Prostate gland (tissue), 2 donors: ENCODE measurements at regions of chr1 and their contacts with region 1.

Region 1: DNA sequence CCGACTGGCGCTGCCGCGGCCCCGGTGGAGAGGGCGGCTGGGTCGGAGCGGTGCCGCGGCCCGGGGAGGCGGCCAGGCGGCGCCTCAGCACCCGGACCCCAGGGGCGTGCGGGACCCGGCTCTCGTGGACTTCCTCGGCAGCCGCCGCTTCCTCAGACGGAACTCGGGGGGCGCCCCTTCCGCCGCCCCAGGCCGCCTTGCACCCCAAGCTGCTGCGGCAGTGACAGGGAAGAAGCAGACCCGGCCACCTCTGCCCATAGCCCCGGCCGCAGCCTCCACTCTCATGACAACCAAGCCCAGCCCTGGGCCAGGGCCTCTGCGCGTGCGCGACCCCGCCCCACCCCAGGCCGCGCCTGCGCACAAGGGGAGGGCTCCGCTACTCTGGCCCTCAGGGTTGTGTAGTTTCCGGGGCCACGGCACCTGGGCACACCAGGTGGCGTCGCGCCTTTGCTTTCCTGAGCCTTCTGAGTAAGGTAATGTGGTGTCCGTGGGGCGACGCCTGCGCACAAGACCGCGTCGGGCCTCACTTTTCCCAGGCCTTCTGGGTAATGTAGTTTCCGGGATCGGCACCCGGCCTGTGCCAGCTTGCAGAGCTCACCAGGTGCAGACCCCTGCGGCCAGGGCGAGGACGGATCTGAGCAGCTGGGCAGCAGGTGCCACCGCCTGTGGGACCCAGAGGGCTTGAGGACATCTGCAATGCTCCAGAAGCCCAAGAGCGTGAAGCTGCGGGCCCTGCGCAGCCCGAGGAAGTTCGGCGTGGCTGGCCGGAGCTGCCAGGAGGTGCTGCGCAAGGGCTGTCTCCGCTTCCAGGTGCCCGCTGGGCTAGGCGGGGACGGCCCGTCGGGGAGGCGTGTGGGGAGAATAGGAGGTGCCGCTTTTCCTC is at the starts of genes CEP104 and DFFB:
- DNase-seq: peak; percentile 98
- H3K4me3 ChIP-seq: peak within 1 kb of the TSS; percentile 77 to 96
- H3K27ac ChIP-seq: peak within 1 kb of the TSS; percentile 64 to 73
- H3K4me1 ChIP-seq: no peaks in the 10 kb centered on the region
- H3K27me3 ChIP-seq: no peaks in the 10 kb centered on the region
- CTCF ChIP-seq: peak in 3 of 4 experiments; percentile 47 to 75 (median 71)
- POLR2A ChIP-seq: peak; percentile 70
- total RNA-seq, gene CEP104: 20.9 to 28.5 TPM
- total RNA-seq, gene DFFB: 5.3 to 20.5 TPM

Region 2: DNA sequence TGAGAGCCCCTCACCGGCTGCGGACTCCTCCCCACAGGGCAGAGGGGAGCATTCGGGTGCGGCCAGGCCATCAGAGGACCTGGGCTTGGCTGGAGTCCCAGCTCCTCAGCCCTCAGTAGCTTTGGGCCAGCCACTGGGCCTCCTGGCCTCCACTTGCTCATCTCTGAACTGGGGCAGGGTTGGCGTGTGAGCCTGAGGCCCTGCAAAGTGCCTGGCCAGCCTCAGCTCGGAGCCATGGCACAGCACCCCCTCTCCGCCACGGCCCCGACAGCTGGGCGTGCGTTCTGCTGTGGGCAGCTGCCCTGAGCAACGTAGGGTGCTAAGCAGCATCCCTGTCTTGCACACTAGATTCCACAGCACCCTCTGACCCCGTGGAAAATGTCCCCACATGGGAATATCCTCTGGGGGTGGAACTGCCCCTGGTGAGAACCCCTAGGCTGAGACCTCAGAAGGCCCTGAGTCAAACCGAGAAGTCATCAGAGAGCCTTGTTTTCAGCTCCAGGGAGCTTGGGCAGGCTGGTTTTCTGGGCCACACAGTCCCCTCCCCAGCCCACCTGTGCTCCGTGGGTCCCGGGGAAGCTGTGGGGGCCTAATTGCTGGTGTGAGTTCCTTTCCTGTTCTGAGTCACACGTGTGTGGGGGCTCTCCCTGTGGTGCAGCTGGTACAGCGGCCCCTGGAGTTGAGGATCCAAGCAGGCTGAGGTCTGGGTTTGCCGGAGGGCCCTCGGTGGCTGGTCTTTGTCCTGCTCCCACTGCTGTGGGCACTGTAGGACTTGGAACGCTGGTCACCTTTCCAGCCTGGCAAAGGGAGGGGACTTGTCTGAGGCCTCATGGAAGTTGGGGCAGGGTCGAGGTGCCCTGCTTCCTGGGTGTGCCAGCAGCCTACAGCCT is 180.3 kb before region 1 on chr1:
- intact Hi-C with region 1: no loop called
- DNase-seq: no peak
- H3K4me3 ChIP-seq: no peak overlapping the region
- H3K27ac ChIP-seq: no peak overlapping the region
- H3K4me1 ChIP-seq: no peaks in the 10 kb centered on the region
- H3K27me3 ChIP-seq: no peaks in the 10 kb centered on the region
- CTCF ChIP-seq: no peak
- POLR2A ChIP-seq: no peak

Region 3: DNA sequence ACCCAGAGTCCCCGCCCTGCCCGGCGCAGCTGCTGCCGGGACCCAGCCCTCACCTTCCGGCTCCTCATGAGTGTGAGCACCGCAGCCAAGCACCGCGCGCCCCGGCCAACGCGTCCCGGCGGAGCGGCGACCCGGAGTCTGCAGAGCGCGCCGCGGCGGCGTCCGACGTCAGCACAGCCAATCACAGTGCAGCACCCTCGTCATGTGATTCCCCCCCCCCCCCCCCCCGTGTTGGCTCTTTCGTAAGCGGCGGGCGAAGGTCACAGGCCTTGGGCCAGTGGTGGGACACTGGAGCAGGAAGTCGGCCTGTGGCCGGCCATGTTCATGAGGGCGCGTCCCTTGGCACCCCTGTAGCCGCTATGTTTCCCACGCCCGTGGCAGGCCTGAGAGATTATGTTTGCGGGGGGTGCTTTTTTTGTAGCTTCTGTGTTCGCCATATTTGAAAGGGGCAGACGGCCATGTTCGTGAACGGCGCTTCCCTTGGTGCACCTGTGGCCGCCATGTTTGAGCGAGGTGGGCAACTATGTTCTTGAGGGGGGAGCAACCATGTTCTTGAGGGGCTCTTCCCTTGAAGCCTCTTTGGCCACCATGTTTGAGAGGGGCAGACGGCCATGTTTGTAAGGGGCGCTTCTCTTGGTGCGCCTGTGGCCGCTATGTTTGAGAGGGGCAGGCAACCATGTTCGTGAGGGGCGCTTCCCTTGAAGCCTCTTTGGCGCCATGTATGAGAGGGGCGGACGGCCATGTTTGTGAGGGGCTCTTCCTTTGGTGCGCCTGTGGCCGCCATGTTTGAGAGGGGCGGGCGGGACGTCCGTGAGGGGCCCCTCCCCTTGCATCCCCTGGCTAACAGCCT is 43.2 kb after region 1 on chr1 and contains the start of gene C1orf174:
- intact Hi-C with region 1: loop called (anchors 2 kb)
- DNase-seq: peak; percentile 94
- H3K4me3 ChIP-seq: peak within 1 kb of the TSS; percentile 85 to 92
- H3K27ac ChIP-seq: peak within 1 kb of the TSS; percentile 94 to 95
- H3K4me1 ChIP-seq: no peaks in the 10 kb centered on the region
- H3K27me3 ChIP-seq: no peaks in the 10 kb centered on the region
- CTCF ChIP-seq: no peak
- POLR2A ChIP-seq: no peak
- total RNA-seq, gene C1orf174: 27.1 to 32.7 TPM